Heart left ventricle (tissue), 16 donors: ENCODE measurements at regions of chr4 and their contacts with region 1.

Region 1: GRCh38 chr4:185656467-185656931 is 121.2 kb upstream of the PDLIM3 start:
- DNase-seq: peak in 4 of 5 donors; percentile 42 to 71 (median 55)
- ATAC-seq: peak; percentile 39 to 78 (median 53)
- H3K4me3 ChIP-seq: peak overlapping the region in 10 of 12 donors; percentile 14 to 58 (median 41)
- H3K27ac ChIP-seq: peak overlapping the region; percentile 30 to 87 (median 66)
- H3K4me1 ChIP-seq: peaks cover 0 to 60% (median 14%) of the 10 kb centered on the region in 12 donors
- H3K27me3 ChIP-seq: no peaks in the 10 kb centered on the region
- CTCF ChIP-seq: peak in 10 of 12 donors; percentile 10 to 58 (median 34)
- POLR2A ChIP-seq: no peak

Region 2: DNA sequence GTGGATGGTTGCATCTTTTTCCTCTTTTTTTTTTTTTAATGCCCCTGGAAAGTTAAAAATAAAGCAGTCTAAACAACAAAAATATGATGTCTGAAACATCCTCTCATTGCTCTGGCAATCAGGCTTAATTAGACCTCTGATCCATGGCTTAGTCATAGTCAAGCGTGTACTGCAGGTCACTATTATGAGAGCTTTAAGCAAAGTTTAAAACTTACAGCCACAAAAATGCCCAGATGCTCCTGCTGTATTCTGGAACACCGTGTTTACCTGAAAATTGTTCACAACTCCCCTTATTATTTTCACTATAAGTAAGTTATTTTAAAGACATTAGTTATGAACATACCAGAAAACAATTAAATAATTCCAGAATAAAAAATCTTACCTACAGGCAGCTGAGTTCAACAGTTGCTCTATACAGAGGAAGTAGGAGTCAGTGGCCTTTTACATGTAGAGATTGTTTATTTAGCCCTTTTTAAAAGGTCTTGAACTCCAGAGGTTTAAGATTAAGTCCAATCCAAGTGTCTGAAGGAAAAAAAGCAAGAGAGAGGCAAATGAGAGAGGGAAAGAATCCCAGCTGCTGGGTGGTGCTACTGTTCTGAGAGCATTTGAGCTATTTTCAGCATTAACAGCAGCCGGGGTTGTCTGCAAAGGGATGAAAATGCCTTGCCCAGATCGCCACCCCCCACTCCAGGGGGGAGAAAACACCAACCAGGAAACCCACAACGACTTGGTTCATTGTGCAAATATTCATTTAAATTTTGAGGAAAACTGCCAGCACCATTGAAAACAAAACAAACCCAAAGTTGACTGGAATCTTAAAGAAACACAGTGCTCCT is 118.6 kb after region 1 on chr4:
- intact Hi-C with region 1: loop called in 2 of 10 experiments (anchors 10 kb)
- DNase-seq: peak in 1 of 5 donors; percentile 45
- ATAC-seq: peak; percentile 8 to 35 (median 24)
- H3K4me3 ChIP-seq: peak overlapping the region; percentile 3 to 56 (median 48)
- H3K27ac ChIP-seq: peak overlapping the region; percentile 71 to 95 (median 82)
- H3K4me1 ChIP-seq: peaks cover 0 to 74% (median 33%) of the 10 kb centered on the region in 12 donors
- H3K27me3 ChIP-seq: no peaks in the 10 kb centered on the region
- CTCF ChIP-seq: peak in 1 of 12 donors; percentile 5
- POLR2A ChIP-seq: no peak

Region 3: DNA sequence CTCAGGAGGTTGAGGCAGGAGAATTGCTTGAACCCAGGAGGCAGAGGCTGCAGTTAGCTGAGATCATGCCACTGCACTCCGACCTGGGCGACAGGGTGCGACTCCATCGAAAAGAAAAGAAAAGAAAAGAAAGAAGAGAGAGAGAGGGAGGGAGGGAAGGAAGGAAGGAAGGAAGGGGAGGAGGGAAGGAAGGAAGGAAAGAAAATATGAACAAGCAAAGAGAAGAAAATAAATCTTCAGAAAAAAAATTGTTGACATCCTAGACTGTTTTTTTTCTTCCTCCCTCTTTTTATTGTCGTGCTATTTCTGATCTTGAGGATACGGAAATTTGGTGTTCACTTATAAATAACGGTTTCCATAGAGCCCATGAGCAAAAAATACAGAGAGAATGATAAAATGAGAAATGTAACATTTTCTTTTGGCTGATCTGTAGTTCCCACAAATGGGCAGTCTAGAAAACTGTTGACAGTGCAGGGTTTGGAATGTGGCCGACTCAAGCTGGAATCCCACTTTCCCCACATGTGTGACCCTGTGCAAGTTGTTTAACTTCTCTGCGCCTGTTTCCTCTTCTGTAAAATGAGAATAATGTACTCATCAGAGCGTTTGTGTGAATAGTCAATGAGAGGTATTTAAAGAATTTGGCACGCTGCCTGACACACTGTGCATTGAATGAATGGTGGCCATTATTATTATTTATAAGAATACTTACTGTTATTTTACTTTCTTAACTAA is 136.1 kb after region 1 on chr4:
- intact Hi-C with region 1: loop called in 2 of 10 experiments (anchors 10 kb)
- DNase-seq: no peak
- ATAC-seq: no peak
- H3K4me3 ChIP-seq: no peak overlapping the region
- H3K27ac ChIP-seq: peak overlapping the region in 11 of 12 donors; percentile 3 to 62 (median 33)
- H3K4me1 ChIP-seq: peaks cover 5 to 90% (median 30%) of the 10 kb centered on the region in 12 donors
- H3K27me3 ChIP-seq: no peaks in the 10 kb centered on the region
- CTCF ChIP-seq: no peak
- POLR2A ChIP-seq: no peak

Region 4: GRCh38 chr4:185847352-185848107 is 191.0 kb after region 1 on chr4:
- intact Hi-C with region 1: loop called in 1 of 10 experiments (anchors 5 kb)
- DNase-seq: peak; percentile 68 to 88 (median 79)
- ATAC-seq: peak; percentile 87 to 92 (median 90)
- H3K4me3 ChIP-seq: no peak overlapping the region
- H3K27ac ChIP-seq: peak overlapping the region; percentile 52 to 90 (median 78)
- H3K4me1 ChIP-seq: peaks cover 0 to 37% (median 9%) of the 10 kb centered on the region in 12 donors
- H3K27me3 ChIP-seq: no peaks in the 10 kb centered on the region
- CTCF ChIP-seq: no peak
- POLR2A ChIP-seq: no peak